ENCODE measurements at regions of chr9 and their contacts with region 1.

Region 1: GRCh38 chr9:34500623-34501267 is 22.0 kb downstream of the ENHO start:
- DNase-seq: peak; percentile 53 to 57
- H3K4me3 ChIP-seq: no peak overlapping the region
- H3K27ac ChIP-seq: no peak overlapping the region
- H3K4me1 ChIP-seq: no peaks in the 10 kb centered on the region
- H3K27me3 ChIP-seq: no peaks in the 10 kb centered on the region
- CTCF ChIP-seq: peak; percentile 81 to 95 (median 88)
- POLR2A ChIP-seq: no peak

Region 2: DNA sequence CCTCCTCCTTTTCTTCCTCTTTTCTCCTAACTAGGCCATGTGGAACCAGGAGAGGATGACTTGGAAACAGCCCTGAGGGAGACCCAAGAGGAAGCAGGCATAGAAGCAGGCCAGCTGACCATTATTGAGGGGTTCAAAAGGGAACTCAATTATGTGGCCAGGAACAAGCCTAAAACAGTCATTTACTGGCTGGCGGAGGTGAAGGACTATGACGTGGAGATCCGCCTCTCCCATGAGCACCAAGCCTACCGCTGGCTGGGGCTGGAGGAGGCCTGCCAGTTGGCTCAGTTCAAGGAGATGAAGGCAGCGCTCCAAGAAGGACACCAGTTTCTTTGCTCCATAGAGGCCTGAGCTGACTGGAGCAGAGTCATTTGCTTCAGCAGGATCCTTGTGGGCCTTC is 157.7 kb before region 1 on chr9:
- intact Hi-C with region 1: no loop called
- DNase-seq: peak; percentile 62 to 89
- H3K4me3 ChIP-seq: no peak overlapping the region
- H3K27ac ChIP-seq: peak overlapping the region; percentile 40
- H3K4me1 ChIP-seq: no peaks in the 10 kb centered on the region
- H3K27me3 ChIP-seq: no peaks in the 10 kb centered on the region
- CTCF ChIP-seq: no peak
- POLR2A ChIP-seq: no peak

Region 3: DNA sequence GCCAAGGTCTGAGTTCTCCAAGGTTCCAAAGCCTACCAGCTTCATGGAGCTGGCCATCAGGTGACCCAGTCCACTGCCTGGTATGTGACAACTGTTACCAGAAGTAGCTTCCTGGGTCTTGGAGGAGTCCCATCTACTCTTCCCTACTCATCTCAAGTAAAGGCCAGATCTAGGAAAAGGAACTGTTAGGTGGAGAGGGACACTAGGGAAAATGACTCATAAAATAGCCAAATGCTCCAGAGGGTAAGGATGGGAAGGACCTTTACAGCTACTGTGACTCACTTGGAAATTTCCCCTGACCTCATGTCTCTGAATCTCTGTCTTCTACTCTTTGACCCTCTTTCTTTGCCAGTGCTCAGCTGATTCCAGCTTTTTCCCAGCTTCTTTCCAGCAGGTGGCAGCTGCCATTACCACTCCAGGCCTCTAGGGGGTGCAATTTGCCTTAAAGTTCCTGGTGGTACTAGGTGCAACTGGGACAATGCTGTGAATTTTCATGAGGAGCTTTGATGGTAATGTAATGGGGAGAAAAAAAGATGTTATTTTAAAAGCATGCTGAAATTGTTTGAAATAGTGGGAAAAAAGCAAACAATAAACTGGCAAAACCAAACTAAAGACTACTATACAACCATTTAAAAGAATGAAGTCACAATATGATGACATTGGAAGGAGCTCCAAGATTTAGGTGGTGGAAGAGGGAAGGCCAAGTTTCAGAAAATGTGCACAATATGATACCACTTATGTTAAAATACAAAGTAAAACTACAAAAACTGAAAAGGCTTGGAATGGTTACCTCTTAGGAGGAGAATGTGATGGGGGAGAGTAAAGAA is 97.0 kb before region 1 on chr9:
- intact Hi-C with region 1: loop called (anchors 5 kb)
- DNase-seq: peak; percentile 67 to 73
- H3K4me3 ChIP-seq: no peak overlapping the region
- H3K27ac ChIP-seq: no peak overlapping the region
- H3K4me1 ChIP-seq: no peaks in the 10 kb centered on the region
- H3K27me3 ChIP-seq: no peaks in the 10 kb centered on the region
- CTCF ChIP-seq: peak; percentile 89 to 96 (median 91)
- POLR2A ChIP-seq: no peak

Region 4: GRCh38 chr9:34637356-34638137 is 136.8 kb after region 1 on chr9 and contains the start of gene SIGMAR1:
- intact Hi-C with region 1: no loop called
- DNase-seq: peak; percentile 92 to 93
- H3K4me3 ChIP-seq: peak within 1 kb of the TSS; percentile 63 to 79
- H3K27ac ChIP-seq: peak within 1 kb of the TSS; percentile 81 to 82
- H3K4me1 ChIP-seq: no peaks in the 10 kb centered on the region
- H3K27me3 ChIP-seq: no peaks in the 10 kb centered on the region
- CTCF ChIP-seq: peak in 2 of 4 experiments; percentile 5 to 16
- POLR2A ChIP-seq: peak; percentile 62 to 89
- total RNA-seq, gene SIGMAR1: 34.1 to 55.2 (median 51.3) TPM